ENCODE measurements at regions of chr17 and their contacts with region 1.

Region 1: GRCh38 chr17:64129764-64130558 is at the start of gene ERN1:
- DNase-seq: peak; percentile 97
- H3K4me3 Mint-ChIP-seq: peak within 1 kb of the TSS; percentile 99
- H3K27ac Mint-ChIP-seq: peak within 1 kb of the TSS; percentile 97
- H3K4me1 Mint-ChIP-seq: peaks cover 54% of the 10 kb centered on the region
- H3K27me3 Mint-ChIP-seq: no peaks in the 10 kb centered on the region
- total RNA-seq, gene ERN1: 41.3 and 52.1 TPM in 2 replicates

Region 2: GRCh38 chr17:63827002-63827771 is 302.8 kb before region 1 on chr17 and contains the starts of genes FTSJ3 and PSMC5:
- intact Hi-C with region 1: loop called (anchors 1 kb)
- DNase-seq: peak; percentile 99
- H3K4me3 Mint-ChIP-seq: peak within 1 kb of the TSS; percentile 99
- H3K27ac Mint-ChIP-seq: peak within 1 kb of the TSS; percentile 99
- H3K4me1 Mint-ChIP-seq: peaks cover 63% of the 10 kb centered on the region
- H3K27me3 Mint-ChIP-seq: no peaks in the 10 kb centered on the region
- total RNA-seq, gene FTSJ3: 99.6 and 100 TPM in 2 replicates
- total RNA-seq, gene PSMC5: 189 and 199 TPM in 2 replicates

Region 3: DNA sequence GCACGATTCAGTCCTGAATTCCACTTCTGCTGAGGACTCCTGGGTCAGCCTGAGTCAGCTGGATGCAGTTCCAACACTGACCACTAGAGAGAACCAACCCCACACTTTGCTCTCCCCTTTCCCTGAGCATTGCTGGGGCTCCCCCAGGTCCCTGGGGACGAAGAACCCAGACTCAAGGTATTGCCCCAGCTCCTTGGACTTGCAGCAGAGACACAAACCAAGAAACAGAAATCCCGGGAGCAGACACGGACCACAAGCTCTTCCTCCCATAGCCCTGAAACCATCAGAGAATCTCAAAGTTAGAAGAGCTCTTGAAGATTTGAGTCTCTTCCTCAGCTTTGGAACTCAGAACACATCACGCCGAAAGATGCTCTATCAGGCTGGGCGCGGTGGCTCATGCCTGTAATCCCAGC is 210.6 kb before region 1 on chr17:
- intact Hi-C with region 1: loop called (anchors 2 kb)
- DNase-seq: peak; percentile 93
- H3K4me3 Mint-ChIP-seq: no peak overlapping the region
- H3K27ac Mint-ChIP-seq: peak overlapping the region; percentile 66
- H3K4me1 Mint-ChIP-seq: peaks cover 9% of the 10 kb centered on the region
- H3K27me3 Mint-ChIP-seq: peaks cover 10% of the 10 kb centered on the region

Region 4: DNA sequence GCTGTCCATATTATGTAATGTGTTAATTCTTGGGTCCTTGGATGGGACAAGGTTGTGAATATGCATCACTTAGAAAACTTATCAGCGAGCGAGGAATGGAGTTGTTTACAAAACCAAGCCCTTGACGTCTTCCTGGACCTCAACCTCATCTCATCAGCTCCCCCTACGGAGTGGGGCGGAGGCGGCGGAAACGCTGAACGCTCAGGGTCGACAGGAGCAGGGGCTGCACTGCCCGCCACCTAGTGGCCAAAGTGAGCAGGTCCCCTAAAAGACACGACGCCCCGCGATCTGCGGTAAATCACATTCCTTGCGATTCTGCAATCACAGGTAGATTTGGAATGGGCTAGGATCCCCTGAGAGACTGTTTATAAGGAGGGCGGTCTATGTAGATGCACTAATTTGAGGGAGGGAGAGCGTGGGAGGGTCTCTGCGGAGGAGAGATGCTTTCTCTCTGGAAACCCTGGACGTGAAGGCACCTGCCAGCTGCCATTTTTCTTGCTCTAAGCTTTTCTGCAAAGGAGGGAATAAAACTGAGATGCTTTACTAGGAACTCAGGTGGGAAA is 104.1 kb before region 1 on chr17:
- intact Hi-C with region 1: loop called (anchors 1 kb)
- DNase-seq: peak; percentile 97
- H3K4me3 Mint-ChIP-seq: peak overlapping the region; percentile 73
- H3K27ac Mint-ChIP-seq: peak overlapping the region; percentile 85
- H3K4me1 Mint-ChIP-seq: peaks cover 62% of the 10 kb centered on the region
- H3K27me3 Mint-ChIP-seq: no peaks in the 10 kb centered on the region

Region 5: DNA sequence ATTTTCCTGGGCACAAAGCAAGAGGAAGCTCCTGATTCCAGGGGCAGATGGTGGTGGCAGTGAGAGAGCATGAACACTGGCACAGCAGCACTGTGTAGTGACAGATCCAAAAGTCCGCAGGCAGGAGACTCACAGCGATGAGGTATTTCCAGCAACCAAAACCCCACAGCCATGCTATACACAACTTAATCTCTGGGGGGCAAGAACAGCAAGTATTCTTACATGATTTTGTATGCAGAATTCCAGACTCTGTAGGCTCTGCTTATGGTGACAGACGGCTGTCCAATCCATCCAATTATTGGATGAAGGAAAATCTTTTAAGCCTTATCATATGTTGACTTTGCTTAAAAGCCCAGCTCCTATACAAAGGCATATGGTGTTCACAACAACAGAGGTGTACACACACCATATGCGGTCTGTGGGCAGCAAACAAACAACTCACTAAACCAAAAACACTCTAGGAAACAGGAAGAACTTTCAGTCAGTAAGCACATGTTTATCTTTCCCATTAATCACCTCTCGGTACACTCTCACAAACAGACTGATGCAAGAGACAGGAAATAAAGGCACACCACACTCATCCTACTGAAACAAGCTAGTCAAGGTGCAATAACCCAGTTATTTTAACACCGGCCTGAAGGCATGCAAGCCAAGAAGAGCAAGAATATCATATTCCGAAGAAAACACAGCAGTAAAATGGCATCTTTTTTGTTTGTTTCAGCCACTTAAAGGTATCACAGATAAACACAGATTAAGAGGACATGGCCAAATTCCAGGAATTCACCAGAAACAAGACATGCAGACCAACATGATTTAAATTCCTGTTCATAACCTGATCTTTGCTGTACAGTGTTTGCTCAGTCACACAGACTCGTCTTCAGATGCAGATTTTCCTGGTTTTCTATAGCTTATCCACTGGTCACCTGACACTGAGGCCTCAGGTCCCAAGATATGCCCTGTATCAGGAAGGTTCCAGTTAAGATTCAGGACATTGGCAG is 47.9 kb before region 1 on chr17:
- intact Hi-C with region 1: loop called (anchors 1 kb)
- DNase-seq: peak; percentile 88
- H3K4me3 Mint-ChIP-seq: peak overlapping the region; percentile 62
- H3K27ac Mint-ChIP-seq: peak overlapping the region; percentile 82
- H3K4me1 Mint-ChIP-seq: peaks cover 41% of the 10 kb centered on the region
- H3K27me3 Mint-ChIP-seq: no peaks in the 10 kb centered on the region

Region 6: GRCh38 chr17:64145757-64146417 is 15.9 kb after region 1 on chr17:
- intact Hi-C with region 1: loop called (anchors 1 kb)
- DNase-seq: peak; percentile 98
- H3K4me3 Mint-ChIP-seq: no peak overlapping the region
- H3K27ac Mint-ChIP-seq: no peak overlapping the region
- H3K4me1 Mint-ChIP-seq: peaks cover 25% of the 10 kb centered on the region
- H3K27me3 Mint-ChIP-seq: no peaks in the 10 kb centered on the region

Region 7: GRCh38 chr17:64506576-64507477 is 376.9 kb after region 1 on chr17 and contains the start of gene CEP95:
- intact Hi-C with region 1: loop called (anchors 5 kb)
- DNase-seq: peak; percentile 98
- H3K4me3 Mint-ChIP-seq: peak within 1 kb of the TSS; percentile 99
- H3K27ac Mint-ChIP-seq: peak within 1 kb of the TSS; percentile 100
- H3K4me1 Mint-ChIP-seq: peaks cover 40% of the 10 kb centered on the region
- H3K27me3 Mint-ChIP-seq: no peaks in the 10 kb centered on the region
- total RNA-seq, gene CEP95: 42.9 and 48.3 TPM in 2 replicates